B cell (primary cell): ENCODE measurements at regions of chr17 and their contacts with region 1.

Region 1: DNA sequence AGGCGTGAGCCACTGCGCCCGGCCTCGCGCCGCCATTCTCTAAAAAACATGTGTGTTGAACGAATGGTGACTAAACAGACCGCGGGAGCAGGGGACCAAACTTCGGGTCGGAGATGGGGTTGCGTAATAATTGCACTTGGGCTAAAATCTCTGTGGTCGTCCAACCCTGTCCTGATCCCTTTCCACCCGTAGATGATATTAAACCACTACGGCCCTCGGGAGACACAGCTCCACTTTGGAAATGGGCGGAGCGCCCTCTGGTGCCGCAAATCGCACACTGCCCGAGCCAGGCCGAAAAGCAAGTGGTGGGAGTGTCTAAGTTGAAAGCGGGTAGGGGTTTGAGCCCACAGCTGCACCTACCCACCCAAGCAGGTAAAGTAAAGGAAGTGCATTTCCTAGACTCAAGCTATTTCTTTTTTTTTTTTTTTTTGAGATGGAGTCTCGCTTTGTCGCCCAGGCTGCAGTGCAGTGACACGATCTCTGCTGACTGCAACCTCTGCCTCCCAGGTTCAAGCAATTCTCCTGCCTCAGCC is 17.0 kb downstream of the CAVIN1 start:
- DNase-seq: peak; percentile 86
- ATAC-seq: peak; percentile 79
- H3K4me3 ChIP-seq: no peak overlapping the region
- H3K4me3 Mint-ChIP-seq: no peak overlapping the region
- H3K27ac ChIP-seq: no peak overlapping the region
- H3K27ac Mint-ChIP-seq: peak overlapping the region; percentile 27
- H3K4me1 ChIP-seq: peaks cover 2 to 16% of the 10 kb centered on the region in 2 donors
- H3K4me1 Mint-ChIP-seq: peaks cover 13% of the 10 kb centered on the region
- H3K27me3 ChIP-seq: peaks cover 0 to 10% (median 2%) of the 10 kb centered on the region in 4 experiments
- H3K27me3 Mint-ChIP-seq: peaks cover 5% of the 10 kb centered on the region
- CTCF ChIP-seq: peak; percentile 89

Region 2: GRCh38 chr17:42221937-42222745 is 183.9 kb before region 1 on chr17:
- CTCF ChIA-PET with region 1: interaction called, 16 read pairs
- POLR2A ChIA-PET with region 1: no interaction called
- intact Hi-C with region 1: loop called (anchors 2 kb)
- DNase-seq: peak; percentile 65
- ATAC-seq: peak; percentile 64
- H3K4me3 ChIP-seq: no peak overlapping the region
- H3K4me3 Mint-ChIP-seq: no peak overlapping the region
- H3K27ac ChIP-seq: no peak overlapping the region
- H3K27ac Mint-ChIP-seq: no peak overlapping the region
- H3K4me1 ChIP-seq: no peaks in the 10 kb centered on the region
- H3K4me1 Mint-ChIP-seq: no peaks in the 10 kb centered on the region
- H3K27me3 ChIP-seq: no peaks in the 10 kb centered on the region
- H3K27me3 Mint-ChIP-seq: no peaks in the 10 kb centered on the region
- CTCF ChIP-seq: peak; percentile 66

Region 3: GRCh38 chr17:42322382-42323267 is 83.4 kb before region 1 on chr17:
- CTCF ChIA-PET with region 1: interaction called, 546 read pairs
- POLR2A ChIA-PET with region 1: interaction called, 6 read pairs
- intact Hi-C with region 1: loop called (anchors 1 kb)
- DNase-seq: peak; percentile 94
- ATAC-seq: peak; percentile 98
- H3K4me3 ChIP-seq: no peak overlapping the region
- H3K4me3 Mint-ChIP-seq: no peak overlapping the region
- H3K27ac ChIP-seq: no peak overlapping the region
- H3K27ac Mint-ChIP-seq: peak overlapping the region; percentile 77
- H3K4me1 ChIP-seq: peaks cover 12 to 27% of the 10 kb centered on the region in 2 donors
- H3K4me1 Mint-ChIP-seq: peaks cover 26% of the 10 kb centered on the region
- H3K27me3 ChIP-seq: no peaks in the 10 kb centered on the region
- H3K27me3 Mint-ChIP-seq: no peaks in the 10 kb centered on the region
- CTCF ChIP-seq: peak; percentile 99

Region 4: DNA sequence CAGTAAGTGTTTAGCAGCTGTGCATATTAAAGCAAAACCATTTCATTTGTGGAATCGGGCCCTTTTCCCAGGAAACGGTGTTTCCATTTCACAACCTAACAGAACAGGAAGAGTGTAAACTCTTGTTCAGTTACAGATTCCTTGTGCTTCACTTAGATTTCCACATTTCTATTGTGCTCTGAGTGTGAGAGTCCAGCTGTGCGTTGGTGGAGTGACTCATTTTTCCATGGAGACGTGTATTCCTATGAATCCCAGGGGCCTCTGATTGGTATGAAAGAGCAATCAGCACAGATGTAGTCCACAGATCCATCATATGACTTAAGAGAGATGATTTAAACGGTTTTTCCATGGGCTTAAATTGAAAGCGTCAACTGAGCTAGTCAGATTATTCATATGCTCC is 30.4 kb after region 1 on chr17:
- CTCF ChIA-PET with region 1: interaction called, 11 read pairs
- POLR2A ChIA-PET with region 1: no interaction called
- intact Hi-C with region 1: no loop called
- DNase-seq: no peak
- ATAC-seq: no peak
- H3K4me3 ChIP-seq: no peak overlapping the region
- H3K4me3 Mint-ChIP-seq: no peak overlapping the region
- H3K27ac ChIP-seq: no peak overlapping the region
- H3K27ac Mint-ChIP-seq: no peak overlapping the region
- H3K4me1 ChIP-seq: peaks cover 6 to 7% of the 10 kb centered on the region in 2 donors
- H3K4me1 Mint-ChIP-seq: peaks cover 10% of the 10 kb centered on the region
- H3K27me3 ChIP-seq: peaks cover 0 to 5% (median 0%) of the 10 kb centered on the region in 4 experiments
- H3K27me3 Mint-ChIP-seq: no peaks in the 10 kb centered on the region
- CTCF ChIP-seq: no peak

Region 5: GRCh38 chr17:42517516-42517915 is 111.5 kb after region 1 on chr17:
- CTCF ChIA-PET with region 1: interaction called, 24 read pairs
- POLR2A ChIA-PET with region 1: no interaction called
- intact Hi-C with region 1: loop called (anchors 5 kb)
- DNase-seq: peak; percentile 87
- ATAC-seq: peak; percentile 90
- H3K4me3 ChIP-seq: no peak overlapping the region
- H3K4me3 Mint-ChIP-seq: no peak overlapping the region
- H3K27ac ChIP-seq: no peak overlapping the region
- H3K27ac Mint-ChIP-seq: peak overlapping the region; percentile 53
- H3K4me1 ChIP-seq: peaks cover 0 to 7% of the 10 kb centered on the region in 2 donors
- H3K4me1 Mint-ChIP-seq: peaks cover 3% of the 10 kb centered on the region
- H3K27me3 ChIP-seq: no peaks in the 10 kb centered on the region
- H3K27me3 Mint-ChIP-seq: no peaks in the 10 kb centered on the region
- CTCF ChIP-seq: peak; percentile 91